Activated B cell treated with CpG ODN at 0.5 μM for 24 hours (primary cell): ENCODE measurements at regions of chr17 and their contacts with region 1.

Region 1: GRCh38 chr17:50547035-50547735 is at the start of gene SPATA20:
- DNase-seq: peak; percentile 81
- ATAC-seq: peak; percentile 89
- H3K4me3 Mint-ChIP-seq: peak within 1 kb of the TSS; percentile 85
- H3K27ac Mint-ChIP-seq: peak within 1 kb of the TSS; percentile 66
- H3K4me1 Mint-ChIP-seq: peaks cover 21% of the 10 kb centered on the region
- H3K27me3 Mint-ChIP-seq: peaks cover 7% of the 10 kb centered on the region
- CTCF ChIP-seq: no peak
- total RNA-seq, gene SPATA20: 45.6 and 52.3 TPM in 2 replicates

Region 2: DNA sequence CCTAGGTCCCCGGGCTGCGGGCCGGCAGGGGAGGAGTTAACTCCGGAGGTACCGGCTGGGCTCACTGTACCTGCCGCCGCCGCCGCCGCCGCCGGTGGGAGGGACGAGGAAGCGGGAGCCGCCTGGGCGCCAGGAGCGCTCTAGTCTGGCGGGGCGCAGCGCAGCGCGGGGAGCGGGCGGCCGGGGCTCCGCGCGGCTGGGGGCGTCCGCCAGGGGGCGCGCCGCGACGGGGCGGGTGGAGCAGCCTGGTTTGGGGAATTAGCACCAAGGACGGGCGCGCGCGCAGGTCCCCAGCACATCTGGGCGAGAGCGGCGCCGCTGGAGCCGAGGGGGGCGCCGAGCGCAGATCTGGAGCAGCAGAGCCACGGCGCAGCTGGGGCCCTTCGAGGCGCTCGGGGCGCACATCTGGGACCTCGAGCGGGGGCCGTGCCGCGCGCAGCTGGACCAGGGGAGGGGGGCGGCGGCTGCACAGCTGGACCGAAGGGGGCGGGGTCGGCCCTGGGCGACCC is 971.6 kb before region 1 on chr17 and contains the start of gene NXPH3:
- CTCF ChIA-PET with region 1: no interaction called
- POLR2A ChIA-PET with region 1: no interaction called
- intact Hi-C with region 1: no loop called
- DNase-seq: peak; percentile 56
- ATAC-seq: peak; percentile 74
- H3K4me3 Mint-ChIP-seq: peak within 1 kb of the TSS; percentile 77
- H3K27ac Mint-ChIP-seq: no peak within 1 kb of the TSS
- H3K4me1 Mint-ChIP-seq: peaks cover 11% of the 10 kb centered on the region
- H3K27me3 Mint-ChIP-seq: peaks cover 42% of the 10 kb centered on the region
- CTCF ChIP-seq: no peak
- total RNA-seq, gene NXPH3: not detected in 2 replicates

Region 3: GRCh38 chr17:50468409-50469207 is 78.6 kb before region 1 on chr17 and contains the start of gene CHAD:
- CTCF ChIA-PET with region 1: no interaction called
- POLR2A ChIA-PET with region 1: no interaction called
- intact Hi-C with region 1: no loop called
- DNase-seq: no peak
- ATAC-seq: peak; percentile 66
- H3K4me3 Mint-ChIP-seq: peak within 1 kb of the TSS; percentile 53
- H3K27ac Mint-ChIP-seq: no peak within 1 kb of the TSS
- H3K4me1 Mint-ChIP-seq: peaks cover 39% of the 10 kb centered on the region
- H3K27me3 Mint-ChIP-seq: peaks cover 10% of the 10 kb centered on the region
- CTCF ChIP-seq: no peak
- total RNA-seq, gene CHAD: 0.34 and 0.42 TPM in 2 replicates

Region 4: GRCh38 chr17:50560185-50560824 is 13.1 kb after region 1 on chr17 and contains the start of gene CACNA1G:
- CTCF ChIA-PET with region 1: interaction called, 6 read pairs
- POLR2A ChIA-PET with region 1: interaction called, 8 read pairs
- intact Hi-C with region 1: loop called (anchors 1 kb)
- DNase-seq: peak; percentile 86
- ATAC-seq: peak; percentile 90
- H3K4me3 Mint-ChIP-seq: peak within 1 kb of the TSS; percentile 84
- H3K27ac Mint-ChIP-seq: no peak within 1 kb of the TSS
- H3K4me1 Mint-ChIP-seq: peaks cover 29% of the 10 kb centered on the region
- H3K27me3 Mint-ChIP-seq: peaks cover 37% of the 10 kb centered on the region
- CTCF ChIP-seq: no peak
- total RNA-seq, gene CACNA1G: 0.07 TPM in 1 of 2 replicates, not detected in the other

Region 5: DNA sequence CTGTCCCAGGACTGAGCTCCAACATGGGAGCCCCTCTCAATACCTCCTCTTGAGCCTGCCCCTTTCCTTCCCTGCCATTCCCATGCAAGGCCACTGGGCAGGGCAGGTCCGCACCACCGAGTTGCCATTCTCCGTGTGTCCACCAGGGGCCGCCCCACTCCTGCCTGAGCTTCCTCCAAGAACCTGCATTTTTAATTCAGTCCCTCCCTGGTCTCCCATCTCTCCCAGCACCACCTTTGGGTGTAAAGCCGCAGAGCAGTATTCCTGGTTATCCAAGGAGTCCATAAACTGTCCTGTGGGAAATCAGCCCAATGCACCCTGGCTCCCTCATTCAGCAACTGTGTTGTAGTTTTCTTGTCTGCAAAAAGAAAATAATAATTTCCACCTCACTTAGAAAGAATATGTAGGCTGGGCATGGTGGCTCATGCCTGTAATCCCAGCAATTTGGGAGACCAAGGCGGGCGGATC is 236.0 kb after region 1 on chr17:
- CTCF ChIA-PET with region 1: no interaction called
- POLR2A ChIA-PET with region 1: no interaction called
- intact Hi-C with region 1: loop called (anchors 1 kb)
- DNase-seq: peak; percentile 76
- ATAC-seq: peak; percentile 99
- H3K4me3 Mint-ChIP-seq: no peak overlapping the region
- H3K27ac Mint-ChIP-seq: no peak overlapping the region
- H3K4me1 Mint-ChIP-seq: peaks cover 6% of the 10 kb centered on the region
- H3K27me3 Mint-ChIP-seq: peaks cover 9% of the 10 kb centered on the region
- CTCF ChIP-seq: peak; percentile 88

Region 6: GRCh38 chr17:50956750-50957523 is 409.8 kb after region 1 on chr17:
- CTCF ChIA-PET with region 1: interaction called, 3 read pairs
- POLR2A ChIA-PET with region 1: interaction called, 4 read pairs
- intact Hi-C with region 1: loop called (anchors 1 kb)
- DNase-seq: peak; percentile 45
- ATAC-seq: peak; percentile 92
- H3K4me3 Mint-ChIP-seq: no peak overlapping the region
- H3K27ac Mint-ChIP-seq: no peak overlapping the region
- H3K4me1 Mint-ChIP-seq: peaks cover 2% of the 10 kb centered on the region
- H3K27me3 Mint-ChIP-seq: no peaks in the 10 kb centered on the region
- CTCF ChIP-seq: no peak

Region 7: GRCh38 chr17:51153210-51154072 is 606.3 kb after region 1 on chr17 and contains the start of gene NME1:
- CTCF ChIA-PET with region 1: no interaction called
- POLR2A ChIA-PET with region 1: no interaction called
- intact Hi-C with region 1: loop called (anchors 1 kb)
- DNase-seq: peak; percentile 99
- ATAC-seq: peak; percentile 88
- H3K4me3 Mint-ChIP-seq: no peak within 1 kb of the TSS
- H3K27ac Mint-ChIP-seq: no peak within 1 kb of the TSS
- H3K4me1 Mint-ChIP-seq: peaks cover 7% of the 10 kb centered on the region
- H3K27me3 Mint-ChIP-seq: no peaks in the 10 kb centered on the region
- CTCF ChIP-seq: no peak
- total RNA-seq, gene NME1: 130 and 138 TPM in 2 replicates